ENCODE measurements at regions of chr14 and their contacts with region 1.

Region 1: GRCh38 chr14:68816262-68816942 is 23.5 kb upstream of the ZFP36L1 start:
- DNase-seq: peak; percentile 84 to 88 (median 86)
- H3K4me3 ChIP-seq: peak overlapping the region; percentile 32 to 44
- H3K4me3 Mint-ChIP-seq: peak overlapping the region; percentile 82 to 93 (median 86)
- H3K27ac ChIP-seq: peak overlapping the region; percentile 81
- H3K27ac Mint-ChIP-seq: peak overlapping the region; percentile 95 to 98 (median 95)
- H3K4me1 ChIP-seq: peaks cover 88% of the 10 kb centered on the region
- H3K4me1 Mint-ChIP-seq: peaks cover 50 to 86% (median 67%) of the 10 kb centered on the region in 4 donors
- H3K27me3 ChIP-seq: no peaks in the 10 kb centered on the region
- H3K27me3 Mint-ChIP-seq: no peaks in the 10 kb centered on the region

Region 2: DNA sequence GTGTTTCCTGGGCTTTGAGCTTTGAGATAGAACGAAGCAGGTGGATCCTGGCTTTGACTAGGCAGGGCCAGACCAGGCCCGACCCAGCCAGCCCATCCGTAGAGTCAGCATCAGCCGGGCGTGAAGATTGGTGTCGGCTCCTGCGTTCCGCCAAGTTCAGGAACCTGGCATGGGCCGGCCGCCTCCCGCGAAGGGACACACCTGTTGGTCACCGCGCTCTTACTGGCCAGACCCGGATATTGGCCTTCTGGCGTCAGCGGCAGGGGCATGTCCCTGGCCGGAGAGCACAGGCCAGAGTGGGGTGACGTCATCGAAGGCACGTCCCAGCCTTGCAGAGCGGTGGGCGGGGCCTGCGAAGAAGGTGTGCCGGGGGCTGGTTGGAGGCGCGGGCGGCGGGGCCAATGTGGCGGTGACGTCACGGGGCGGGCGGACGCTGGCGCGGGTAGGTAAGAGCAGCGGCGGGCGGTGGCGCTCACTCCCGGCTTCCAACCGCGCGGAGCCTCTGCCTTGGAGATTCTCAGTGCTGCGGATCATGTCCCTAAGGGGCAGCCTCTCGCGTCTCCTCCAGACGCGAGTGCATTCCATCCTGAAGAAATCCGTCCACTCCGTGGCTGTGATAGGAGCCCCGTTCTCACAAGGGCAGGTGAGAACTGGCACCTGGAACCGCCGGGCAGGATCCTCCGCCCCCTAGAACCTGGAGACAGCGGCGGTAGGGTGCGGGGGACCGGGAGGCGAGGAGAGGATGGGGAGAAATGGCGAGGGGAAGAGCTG is 1196.8 kb before region 1 on chr14 and contains the start of gene ARG2:
- CTCF ChIA-PET with region 1: no interaction called
- POLR2A ChIA-PET with region 1: no interaction called
- intact Hi-C with region 1: loop called (anchors 10 kb)
- DNase-seq: peak; percentile 95 to 96 (median 95)
- H3K4me3 ChIP-seq: peak within 1 kb of the TSS; percentile 52 to 54
- H3K4me3 Mint-ChIP-seq: peak within 1 kb of the TSS; percentile 87 to 92 (median 89)
- H3K27ac ChIP-seq: peak within 1 kb of the TSS; percentile 75
- H3K27ac Mint-ChIP-seq: peak within 1 kb of the TSS; percentile 88 to 98 (median 97)
- H3K4me1 ChIP-seq: peaks cover 15% of the 10 kb centered on the region
- H3K4me1 Mint-ChIP-seq: peaks cover 7 to 25% (median 21%) of the 10 kb centered on the region in 4 donors
- H3K27me3 ChIP-seq: peaks cover 4% of the 10 kb centered on the region
- H3K27me3 Mint-ChIP-seq: peaks cover 2 to 7% of the 10 kb centered on the region in 2 donors
- total RNA-seq, gene ARG2: 0.55 TPM in 1 of 2 experiments, not detected in the other

Region 3: DNA sequence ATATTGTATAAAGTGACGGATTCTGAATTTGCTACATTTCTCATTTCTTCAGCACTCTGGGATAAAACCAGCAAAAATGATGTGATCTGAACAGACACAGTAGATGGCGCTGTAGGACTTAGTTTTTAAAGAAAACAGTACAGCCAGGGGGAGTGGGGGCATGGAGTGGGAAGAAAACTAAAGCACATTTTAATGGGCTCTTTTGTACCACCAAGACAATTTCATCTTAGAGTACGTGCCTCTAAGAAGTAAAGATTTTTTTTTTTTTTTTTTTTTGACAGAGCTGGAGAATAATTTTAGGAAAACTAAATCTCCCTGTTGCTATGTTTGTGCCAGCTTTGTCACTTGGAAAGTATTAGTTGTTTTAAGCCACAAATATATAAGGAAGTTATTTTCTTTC is 872.5 kb before region 1 on chr14:
- CTCF ChIA-PET with region 1: interaction called, 24 read pairs
- POLR2A ChIA-PET with region 1: interaction called, 3 read pairs
- intact Hi-C with region 1: no loop called
- DNase-seq: peak; percentile 47 to 65 (median 53)
- H3K4me3 ChIP-seq: no peak overlapping the region
- H3K4me3 Mint-ChIP-seq: no peak overlapping the region
- H3K27ac ChIP-seq: no peak overlapping the region
- H3K27ac Mint-ChIP-seq: no peak overlapping the region
- H3K4me1 ChIP-seq: no peaks in the 10 kb centered on the region
- H3K4me1 Mint-ChIP-seq: no peaks in the 10 kb centered on the region
- H3K27me3 ChIP-seq: no peaks in the 10 kb centered on the region
- H3K27me3 Mint-ChIP-seq: no peaks in the 10 kb centered on the region

Region 4: DNA sequence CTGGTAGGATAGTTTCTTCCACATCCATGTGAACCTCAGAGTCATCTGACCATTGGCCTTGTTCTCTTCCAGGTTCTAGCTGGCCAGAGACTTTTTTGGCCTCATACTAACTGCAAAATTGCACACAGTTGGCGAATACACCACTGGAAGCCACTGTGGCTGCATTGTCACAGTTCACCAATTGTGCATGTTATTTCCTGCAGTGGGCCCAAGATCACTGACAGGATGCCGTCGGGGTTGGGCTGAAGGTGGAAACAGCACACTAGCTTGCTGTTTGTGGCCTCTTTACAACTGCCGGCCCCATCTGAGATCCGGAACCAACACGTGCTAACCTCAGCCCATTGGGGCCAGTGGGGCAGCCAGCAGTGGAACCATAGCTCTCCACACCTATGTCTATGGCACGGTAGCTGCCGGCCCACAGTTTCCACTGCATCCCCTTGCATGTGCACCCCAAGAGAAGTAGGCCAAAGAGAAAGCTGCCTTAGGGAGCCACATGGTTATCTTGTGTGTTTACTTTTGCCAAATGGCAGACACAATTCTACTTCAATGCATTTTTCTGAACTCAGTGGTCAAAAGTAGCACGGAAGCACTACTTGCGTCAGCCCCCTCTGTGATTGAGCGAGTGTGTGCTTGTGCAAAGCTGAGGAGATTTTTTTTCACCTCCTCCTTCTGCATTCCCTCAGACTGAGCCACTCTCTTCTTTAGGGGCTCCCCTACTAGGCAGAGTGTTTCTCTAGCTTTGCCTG is 532.9 kb before region 1 on chr14:
- CTCF ChIA-PET with region 1: interaction called, 26 read pairs
- POLR2A ChIA-PET with region 1: interaction called, 79 read pairs
- intact Hi-C with region 1: no loop called
- DNase-seq: peak; percentile 47 to 77 (median 68)
- H3K4me3 ChIP-seq: peak overlapping the region in 1 of 2 donors; percentile 1
- H3K4me3 Mint-ChIP-seq: peak overlapping the region in 7 of 8 donors; percentile 44 to 81 (median 75)
- H3K27ac ChIP-seq: peak overlapping the region; percentile 73
- H3K27ac Mint-ChIP-seq: peak overlapping the region; percentile 94 to 99 (median 95)
- H3K4me1 ChIP-seq: peaks cover 74% of the 10 kb centered on the region
- H3K4me1 Mint-ChIP-seq: peaks cover 60 to 90% (median 73%) of the 10 kb centered on the region in 4 donors
- H3K27me3 ChIP-seq: no peaks in the 10 kb centered on the region
- H3K27me3 Mint-ChIP-seq: no peaks in the 10 kb centered on the region

Region 5: GRCh38 chr14:68685419-68686204 is 130.8 kb before region 1 on chr14:
- CTCF ChIA-PET with region 1: interaction called, 37 read pairs
- POLR2A ChIA-PET with region 1: interaction called, 72 read pairs
- intact Hi-C with region 1: loop called (anchors 1 kb)
- DNase-seq: peak; percentile 84 to 97 (median 89)
- H3K4me3 ChIP-seq: peak overlapping the region in 1 of 2 donors; percentile 11
- H3K4me3 Mint-ChIP-seq: peak overlapping the region; percentile 49 to 85 (median 70)
- H3K27ac ChIP-seq: peak overlapping the region; percentile 70
- H3K27ac Mint-ChIP-seq: peak overlapping the region; percentile 93 to 98 (median 97)
- H3K4me1 ChIP-seq: peaks cover 58% of the 10 kb centered on the region
- H3K4me1 Mint-ChIP-seq: peaks cover 48 to 66% (median 60%) of the 10 kb centered on the region in 4 donors
- H3K27me3 ChIP-seq: no peaks in the 10 kb centered on the region
- H3K27me3 Mint-ChIP-seq: no peaks in the 10 kb centered on the region

Region 6: GRCh38 chr14:68757618-68758081 is 58.8 kb before region 1 on chr14:
- CTCF ChIA-PET with region 1: no interaction called
- POLR2A ChIA-PET with region 1: no interaction called
- intact Hi-C with region 1: no loop called
- DNase-seq: no peak
- H3K4me3 ChIP-seq: no peak overlapping the region
- H3K4me3 Mint-ChIP-seq: no peak overlapping the region
- H3K27ac ChIP-seq: no peak overlapping the region
- H3K27ac Mint-ChIP-seq: no peak overlapping the region
- H3K4me1 ChIP-seq: peaks cover 10% of the 10 kb centered on the region
- H3K4me1 Mint-ChIP-seq: peaks cover 4 to 24% (median 14%) of the 10 kb centered on the region in 4 donors
- H3K27me3 ChIP-seq: no peaks in the 10 kb centered on the region
- H3K27me3 Mint-ChIP-seq: no peaks in the 10 kb centered on the region

Region 7: DNA sequence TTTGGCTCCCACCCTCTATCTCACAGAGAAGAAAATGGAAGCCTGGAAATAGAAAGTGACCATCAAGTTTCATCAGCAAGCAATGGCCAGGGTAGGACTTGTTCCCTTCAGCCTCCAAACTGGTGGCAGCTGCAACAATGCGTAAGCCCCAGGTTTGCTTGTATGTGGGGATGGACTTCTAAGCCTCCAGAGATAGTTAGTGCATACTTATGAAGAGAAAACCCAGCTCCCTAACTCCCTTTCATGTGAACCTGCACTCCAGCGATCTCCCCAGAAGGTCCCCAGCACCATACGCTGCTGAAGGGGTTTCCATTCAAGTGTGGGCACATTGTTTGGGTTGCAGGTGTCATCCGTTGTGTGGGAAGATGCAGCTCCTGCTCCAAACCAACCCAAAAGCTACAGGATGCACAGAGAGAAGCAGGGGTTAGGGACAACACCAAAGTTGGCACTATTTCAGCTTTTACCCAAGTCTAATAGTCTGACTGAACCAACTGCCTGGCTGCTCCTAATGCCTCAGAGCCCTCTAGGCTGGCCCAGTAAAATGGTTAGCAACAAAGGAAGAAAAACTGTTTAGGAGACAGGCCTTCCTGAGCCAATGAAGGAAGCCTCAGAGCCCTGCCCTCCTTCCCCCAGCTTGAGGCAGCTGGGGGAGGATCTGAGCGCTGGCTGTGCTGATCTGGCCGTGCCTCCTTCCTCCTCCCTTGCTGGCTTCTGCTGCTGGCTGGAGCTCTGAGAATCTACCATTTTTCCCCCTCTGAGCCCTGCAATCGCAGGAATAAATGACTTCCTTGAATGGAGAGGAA is 35.8 kb before region 1 on chr14:
- CTCF ChIA-PET with region 1: interaction called, 83 read pairs
- POLR2A ChIA-PET with region 1: interaction called, 1,973 read pairs
- intact Hi-C with region 1: no loop called
- DNase-seq: peak in 4 of 5 donors; percentile 27 to 64 (median 38)
- H3K4me3 ChIP-seq: peak overlapping the region in 1 of 2 donors; percentile 49
- H3K4me3 Mint-ChIP-seq: peak overlapping the region; percentile 79 to 93 (median 85)
- H3K27ac ChIP-seq: peak overlapping the region; percentile 58
- H3K27ac Mint-ChIP-seq: peak overlapping the region; percentile 93 to 99 (median 97)
- H3K4me1 ChIP-seq: peaks cover 91% of the 10 kb centered on the region
- H3K4me1 Mint-ChIP-seq: peaks cover 60 to 98% (median 76%) of the 10 kb centered on the region in 4 donors
- H3K27me3 ChIP-seq: no peaks in the 10 kb centered on the region
- H3K27me3 Mint-ChIP-seq: no peaks in the 10 kb centered on the region